ENCODE measurements at regions of chr2 and their contacts with region 1.

Region 1: DNA sequence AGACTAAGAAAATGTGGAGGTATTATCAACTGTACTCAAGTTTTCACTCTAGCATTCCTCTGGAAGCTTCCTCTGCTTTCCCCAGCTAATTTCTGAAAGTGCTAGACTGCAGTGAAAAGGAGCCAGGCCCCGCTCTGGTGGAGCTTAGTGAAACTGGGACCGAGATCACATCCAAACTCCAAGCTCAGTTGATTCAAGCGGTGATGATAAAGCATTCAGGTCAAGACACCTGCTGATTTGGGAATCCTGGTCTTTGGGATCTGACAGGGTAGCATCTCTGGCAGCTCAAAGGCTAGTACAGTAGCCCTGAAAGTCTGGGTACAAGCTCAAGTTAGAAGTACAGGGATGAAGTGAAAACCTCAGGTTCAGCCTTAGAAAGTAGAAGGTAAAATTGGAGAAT is 120.2 kb upstream of the CRIM1 start:
- DNase-seq: no peak
- ATAC-seq: no peak
- H3K4me3 ChIP-seq: no peak overlapping the region
- H3K27ac ChIP-seq: no peak overlapping the region
- H3K4me1 ChIP-seq: peaks cover 7% of the 10 kb centered on the region; the same call in 1 of the 2 replicates
- H3K27me3 ChIP-seq: no peaks in the 10 kb centered on the region
- CTCF ChIP-seq: no peak
- EP300 ChIP-seq: no peak
- POLR2A ChIP-seq: no peak
- RAD21 ChIP-seq: no peak

Region 2: DNA sequence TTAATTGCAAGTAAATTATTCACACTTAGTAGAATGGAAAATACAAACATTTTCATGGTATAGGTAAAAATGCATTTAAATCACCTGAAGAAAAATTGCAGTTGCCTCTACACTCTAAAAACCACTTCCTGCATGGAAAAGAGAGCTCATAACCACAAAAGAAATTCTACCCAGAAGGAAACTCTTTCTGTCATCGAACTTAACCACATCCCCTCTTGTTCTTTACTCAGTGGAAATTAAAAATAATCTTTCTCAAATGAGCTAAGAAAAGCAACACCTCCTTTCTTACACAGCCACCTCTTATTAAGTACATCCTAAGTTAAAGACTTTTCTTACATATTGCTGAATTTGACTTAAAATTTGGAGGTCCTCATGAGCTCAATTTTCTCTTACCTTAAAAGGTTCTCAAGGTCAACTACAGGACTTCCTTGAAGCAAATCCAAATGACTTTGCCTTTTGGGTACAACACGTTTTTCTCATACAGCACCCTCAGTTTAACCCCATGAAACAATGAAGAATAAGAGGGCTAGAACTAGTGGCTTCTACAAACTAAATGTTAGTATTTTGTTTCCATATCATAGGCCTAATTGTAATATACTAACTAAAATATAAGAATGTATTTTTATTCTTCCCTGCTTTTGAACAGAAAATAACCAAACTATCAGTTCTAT is 11.0 kb after region 1 on chr2:
- CTCF ChIA-PET with region 1: interaction called, 7 read pairs
- POLR2A ChIA-PET with region 1: interaction called, 3 read pairs
- RAD21 ChIA-PET with region 1: interaction called, 6 read pairs
- SMC1A ChIA-PET with region 1: interaction called, 12 read pairs
- in situ Hi-C with region 1: no loop called
- intact Hi-C with region 1: no loop called
- DNase-seq: peak; percentile 60
- ATAC-seq: peak; percentile 81
- H3K4me3 ChIP-seq: no peak overlapping the region
- H3K27ac ChIP-seq: peak overlapping the region; percentile 62
- H3K4me1 ChIP-seq: peaks cover 26% of the 10 kb centered on the region
- H3K27me3 ChIP-seq: no peaks in the 10 kb centered on the region
- CTCF ChIP-seq: no peak
- EP300 ChIP-seq: peak; percentile 71 to 78
- POLR2A ChIP-seq: no peak
- RAD21 ChIP-seq: no peak

Region 3: DNA sequence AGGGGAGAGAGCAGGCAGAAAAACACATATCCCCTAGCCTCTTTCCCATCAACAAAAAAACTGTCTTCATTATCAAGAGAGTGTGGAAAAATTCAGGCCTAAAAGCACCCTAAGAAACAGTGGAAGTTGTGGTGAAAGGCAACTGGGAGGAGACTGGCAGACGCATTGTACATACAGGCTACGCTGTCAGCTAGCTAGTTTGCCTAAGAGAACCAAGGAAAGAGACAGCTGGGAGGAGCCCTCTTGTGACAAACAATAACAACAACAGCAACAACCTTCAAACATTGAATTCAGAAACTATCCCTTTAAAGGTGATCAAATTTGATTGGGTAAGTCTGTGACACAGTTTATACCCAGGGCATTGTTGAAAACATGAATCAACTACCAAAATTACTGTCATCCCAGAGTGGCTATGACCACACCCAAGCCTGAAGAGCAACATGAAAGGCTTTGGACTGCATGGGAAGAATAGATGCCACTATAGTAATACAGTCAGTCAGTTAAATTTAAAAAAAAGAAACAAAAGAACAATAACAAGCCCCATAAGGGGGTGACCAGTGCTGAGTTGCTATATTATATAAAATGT is 31.2 kb after region 1 on chr2:
- CTCF ChIA-PET with region 1: no interaction called
- POLR2A ChIA-PET with region 1: no interaction called
- RAD21 ChIA-PET with region 1: no interaction called
- SMC1A ChIA-PET with region 1: no interaction called
- in situ Hi-C with region 1: no loop called
- intact Hi-C with region 1: no loop called
- DNase-seq: no peak
- ATAC-seq: peak; percentile 45
- H3K4me3 ChIP-seq: no peak overlapping the region
- H3K27ac ChIP-seq: no peak overlapping the region
- H3K4me1 ChIP-seq: no peaks in the 10 kb centered on the region
- H3K27me3 ChIP-seq: no peaks in the 10 kb centered on the region
- CTCF ChIP-seq: no peak
- EP300 ChIP-seq: no peak
- POLR2A ChIP-seq: no peak
- RAD21 ChIP-seq: peak; percentile 28; the same call in 1 of the 2 replicates

Measured in GM12878 (cell line).